PC-9 (cell line): ENCODE measurements at regions of chr1 and their contacts with region 1.

Region 1: DNA sequence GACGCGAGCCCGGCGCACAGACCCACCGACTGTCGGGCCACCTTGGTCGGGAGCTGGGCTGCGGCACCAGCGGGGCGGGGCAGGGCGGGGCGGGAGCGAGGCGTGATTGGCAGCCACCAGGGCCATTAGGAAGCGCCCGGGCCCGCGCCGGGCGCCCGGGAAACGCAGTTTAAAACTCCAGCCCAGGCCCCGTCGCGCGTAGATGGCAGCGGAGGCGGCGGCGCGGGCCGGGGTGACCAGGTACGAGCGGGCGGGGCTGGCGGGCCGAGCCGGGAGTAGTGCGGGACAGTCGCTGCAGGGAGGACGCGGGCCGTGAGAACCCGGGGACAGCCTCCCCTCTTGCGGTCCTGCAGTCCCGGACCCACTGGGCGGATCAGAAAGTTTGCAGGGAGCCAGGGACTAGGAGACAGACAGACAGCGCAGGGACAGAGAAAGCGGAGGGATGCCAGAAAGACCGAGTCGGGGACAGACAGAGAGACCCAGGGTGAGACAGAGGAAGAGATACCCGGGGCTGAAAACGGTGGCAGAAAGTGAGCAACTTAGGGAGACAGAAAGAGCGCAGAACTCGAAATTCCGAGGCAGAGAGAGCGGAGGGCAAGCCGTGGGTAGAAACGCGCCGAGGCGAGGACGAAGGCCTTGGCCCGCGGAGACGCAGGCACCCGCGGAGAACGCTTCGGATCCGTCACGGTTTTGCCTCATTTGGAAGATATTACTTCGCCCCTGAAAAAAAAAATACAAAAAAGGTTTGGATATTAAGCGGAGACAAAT is at the start of gene DMBX1:
- DNase-seq: peak in 1 of 2 experiments; percentile 66
- H3K4me3 ChIP-seq: peak within 1 kb of the TSS; percentile 69
- H3K27ac ChIP-seq: no peak within 1 kb of the TSS
- H3K4me1 ChIP-seq: 0 out of 2 replicates have a peak, but pooled peaks cover 6% of the 10 kb centered on the region
- H3K27me3 ChIP-seq: peaks cover 48% of the 10 kb centered on the region
- CTCF ChIP-seq: no peak
- total RNA-seq, gene DMBX1: 0.79 and 1.0 TPM in 2 replicates

Region 2: DNA sequence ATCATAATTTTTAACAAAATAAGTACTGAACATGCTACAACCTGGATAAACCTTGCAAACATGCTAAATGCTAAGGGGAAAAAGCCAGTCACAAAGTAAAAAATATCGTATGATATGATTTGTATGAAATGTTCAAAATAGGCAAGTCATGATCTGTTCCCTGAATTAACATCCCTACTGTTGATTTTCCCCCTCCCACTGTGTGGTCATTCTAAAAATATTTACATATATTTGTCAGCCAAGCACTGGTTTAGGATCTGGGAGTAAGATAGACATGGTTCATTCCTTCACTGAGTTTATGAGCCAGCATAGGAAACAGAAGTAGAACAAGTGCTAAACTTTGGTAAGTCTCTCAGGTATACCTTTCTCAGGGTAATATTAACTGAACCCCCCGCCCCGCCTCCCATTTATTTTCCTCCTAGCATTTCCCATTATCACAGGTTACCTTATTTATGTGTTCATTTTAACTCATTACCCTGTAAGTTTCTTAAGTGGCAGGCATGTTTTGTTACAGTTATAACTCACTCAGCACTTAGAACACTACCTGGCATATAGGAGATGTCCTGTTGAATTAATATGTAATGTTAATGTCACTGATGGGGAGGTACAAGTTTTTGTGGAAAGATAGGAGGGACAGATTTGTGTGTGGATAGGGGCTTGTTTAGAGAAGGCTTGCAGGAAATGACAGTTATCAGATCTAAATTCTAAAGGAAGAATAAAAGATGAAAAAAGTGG is 174.0 kb before region 1 on chr1:
- CTCF ChIA-PET with region 1: no interaction called
- POLR2A ChIA-PET with region 1: no interaction called
- intact Hi-C with region 1: no loop called
- DNase-seq: no peak
- H3K4me3 ChIP-seq: no peak overlapping the region
- H3K27ac ChIP-seq: no peak overlapping the region
- H3K4me1 ChIP-seq: no peaks in the 10 kb centered on the region
- H3K27me3 ChIP-seq: no peaks in the 10 kb centered on the region
- CTCF ChIP-seq: no peak

Region 3: DNA sequence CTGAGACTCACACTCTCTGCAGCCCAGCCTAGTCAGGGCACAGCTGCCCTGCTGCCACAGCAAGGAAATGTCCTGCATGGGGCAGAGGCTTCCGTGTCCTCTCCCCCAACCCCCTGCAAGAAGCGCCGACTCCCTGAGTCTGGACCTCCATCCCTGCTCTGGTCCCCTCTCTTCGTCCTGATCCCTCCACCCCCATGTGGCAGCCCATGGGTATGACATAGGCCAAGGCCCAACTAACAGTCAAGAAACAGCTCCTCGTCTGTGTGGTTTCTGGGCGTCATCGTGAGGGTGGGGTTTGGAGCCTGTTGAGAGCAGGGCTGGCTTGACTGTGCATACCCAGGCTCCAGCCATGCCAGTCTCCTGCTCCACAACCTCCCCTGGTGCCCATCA is 76.2 kb before region 1 on chr1:
- CTCF ChIA-PET with region 1: no interaction called
- POLR2A ChIA-PET with region 1: interaction called, 17 read pairs
- intact Hi-C with region 1: no loop called
- DNase-seq: no peak
- H3K4me3 ChIP-seq: no peak overlapping the region
- H3K27ac ChIP-seq: no peak overlapping the region
- H3K4me1 ChIP-seq: no peaks in the 10 kb centered on the region
- H3K27me3 ChIP-seq: no peaks in the 10 kb centered on the region
- CTCF ChIP-seq: 0 out of 2 replicates have a peak, but pooled peaks have one; percentile 41

Region 4: GRCh38 chr1:46517010-46517600 is 27.3 kb after region 1 on chr1:
- CTCF ChIA-PET with region 1: interaction called, 8 read pairs
- POLR2A ChIA-PET with region 1: interaction called, 3 read pairs
- intact Hi-C with region 1: loop called (anchors 1 kb)
- DNase-seq: peak; percentile 97 to 99
- H3K4me3 ChIP-seq: peak overlapping the region; percentile 35; the same call in 1 of the 2 replicates
- H3K27ac ChIP-seq: peak overlapping the region; percentile 55
- H3K4me1 ChIP-seq: peaks cover 65% of the 10 kb centered on the region
- H3K27me3 ChIP-seq: no peaks in the 10 kb centered on the region
- CTCF ChIP-seq: peak; percentile 38; the same call in 1 of the 2 replicates

Region 5: DNA sequence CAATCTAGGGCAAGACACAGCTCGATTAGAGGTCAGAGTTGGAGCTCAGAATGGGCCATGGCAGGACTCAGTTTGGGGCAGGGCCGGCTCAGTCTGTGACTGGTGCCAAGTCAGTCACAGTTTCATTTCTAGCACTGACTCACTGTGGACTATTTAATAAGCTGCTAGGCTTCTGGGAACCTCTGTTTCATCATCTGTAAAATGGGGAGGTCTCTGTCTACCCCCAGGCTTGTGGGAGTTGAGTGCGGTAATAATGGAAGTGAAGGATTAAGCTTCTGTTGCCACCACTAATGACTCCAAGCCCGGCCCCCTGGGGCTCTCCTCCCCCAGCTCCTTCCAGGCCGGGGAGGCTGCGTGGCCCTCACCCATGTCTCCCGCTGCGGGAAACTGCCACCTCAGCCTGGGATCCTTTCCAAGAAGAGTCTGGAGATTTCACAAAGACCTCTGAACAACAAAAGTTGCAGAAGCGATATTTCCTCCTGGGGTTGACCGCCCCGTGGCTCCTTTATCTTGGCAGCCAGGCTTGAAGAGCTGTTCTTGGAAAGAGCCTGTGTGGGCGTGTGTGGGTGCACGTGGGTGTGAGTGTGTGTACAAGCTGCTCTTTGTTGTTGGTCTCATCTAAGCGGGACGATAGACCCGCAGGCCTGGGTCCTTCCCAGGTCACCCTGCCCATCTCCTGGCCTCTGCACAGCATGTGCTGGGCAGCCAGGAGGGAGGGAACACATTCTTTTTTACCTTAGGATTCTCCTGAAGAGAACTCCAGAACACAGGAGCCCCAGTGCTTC is 32.6 kb after region 1 on chr1:
- CTCF ChIA-PET with region 1: interaction called, 8 read pairs
- POLR2A ChIA-PET with region 1: interaction called, 3 read pairs
- intact Hi-C with region 1: loop called (anchors 1 kb)
- DNase-seq: peak; percentile 81 to 85
- H3K4me3 ChIP-seq: no peak overlapping the region; the same call in 1 of the 2 replicates
- H3K27ac ChIP-seq: peak overlapping the region; percentile 65
- H3K4me1 ChIP-seq: peaks cover 65% of the 10 kb centered on the region
- H3K27me3 ChIP-seq: no peaks in the 10 kb centered on the region
- CTCF ChIP-seq: no peak